Vagina (tissue), 2 donors: ENCODE measurements at regions of chr6 and their contacts with region 1.

Region 1: GRCh38 chr6:156533872-156534524 is 243.2 kb upstream of the ARID1B start:
- DNase-seq: no peak
- H3K4me3 ChIP-seq: no peak overlapping the region
- H3K27ac ChIP-seq: no peak overlapping the region
- H3K4me1 ChIP-seq: no peaks in the 10 kb centered on the region
- H3K27me3 ChIP-seq: no peaks in the 10 kb centered on the region
- CTCF ChIP-seq: no peak
- POLR2A ChIP-seq: no peak

Region 2: GRCh38 chr6:156517088-156517487 is 16.9 kb before region 1 on chr6:
- intact Hi-C with region 1: loop called (anchors 1 kb)
- DNase-seq: no peak
- H3K4me3 ChIP-seq: no peak overlapping the region
- H3K27ac ChIP-seq: no peak overlapping the region
- H3K4me1 ChIP-seq: no peaks in the 10 kb centered on the region
- H3K27me3 ChIP-seq: no peaks in the 10 kb centered on the region
- CTCF ChIP-seq: no peak
- POLR2A ChIP-seq: no peak